GM10248 (cell line): ENCODE measurements at regions of chr16 and their contacts with region 1.

Region 1: GRCh38 chr16:80948886-80949493 is 57.7 kb downstream of the CMC2 start:
- DNase-seq: peak; percentile 53
- CTCF ChIP-seq: peak; percentile 73

Region 2: GRCh38 chr16:80883159-80883642 is 65.8 kb before region 1 on chr16:
- CTCF ChIA-PET with region 1: no interaction called
- POLR2A ChIA-PET with region 1: no interaction called
- DNase-seq: no peak
- CTCF ChIP-seq: no peak

Region 3: DNA sequence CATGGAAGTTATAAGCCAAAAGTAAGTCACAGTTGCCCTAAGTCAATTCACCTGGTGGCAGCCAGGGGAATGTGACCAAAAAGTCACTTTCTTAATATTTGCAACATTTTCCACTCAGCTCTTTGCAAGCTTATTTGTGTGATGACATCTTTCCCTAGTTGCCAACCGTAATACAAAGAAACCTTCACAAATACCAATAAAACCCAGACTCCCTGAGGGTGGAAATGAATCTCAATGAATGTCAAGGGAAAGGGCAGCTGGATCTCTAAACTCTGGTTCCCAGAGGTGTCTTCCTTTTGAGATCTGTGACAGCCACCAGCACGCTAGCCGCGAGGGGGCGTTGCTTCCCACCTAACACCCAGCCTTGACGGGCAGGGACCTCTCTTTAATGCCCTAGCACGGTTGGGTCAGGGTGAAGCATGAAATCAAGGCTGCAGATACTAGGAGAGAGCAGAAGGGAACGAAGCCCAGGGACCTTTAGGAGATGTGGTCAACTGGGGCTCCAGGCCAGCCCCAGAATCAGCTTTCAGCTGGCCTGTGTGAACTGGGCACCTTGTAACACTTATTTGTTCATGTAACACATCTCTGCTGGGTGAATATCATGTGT is 24.5 kb before region 1 on chr16:
- CTCF ChIA-PET with region 1: interaction called, 16 read pairs
- POLR2A ChIA-PET with region 1: no interaction called
- DNase-seq: peak; percentile 65
- CTCF ChIP-seq: peak; percentile 74

Region 4: GRCh38 chr16:81008353-81008702 is 59.3 kb after region 1 on chr16:
- CTCF ChIA-PET with region 1: no interaction called
- POLR2A ChIA-PET with region 1: no interaction called
- DNase-seq: no peak
- CTCF ChIP-seq: no peak